ENCODE measurements at regions of chr14 and their contacts with region 1.

Region 1: DNA sequence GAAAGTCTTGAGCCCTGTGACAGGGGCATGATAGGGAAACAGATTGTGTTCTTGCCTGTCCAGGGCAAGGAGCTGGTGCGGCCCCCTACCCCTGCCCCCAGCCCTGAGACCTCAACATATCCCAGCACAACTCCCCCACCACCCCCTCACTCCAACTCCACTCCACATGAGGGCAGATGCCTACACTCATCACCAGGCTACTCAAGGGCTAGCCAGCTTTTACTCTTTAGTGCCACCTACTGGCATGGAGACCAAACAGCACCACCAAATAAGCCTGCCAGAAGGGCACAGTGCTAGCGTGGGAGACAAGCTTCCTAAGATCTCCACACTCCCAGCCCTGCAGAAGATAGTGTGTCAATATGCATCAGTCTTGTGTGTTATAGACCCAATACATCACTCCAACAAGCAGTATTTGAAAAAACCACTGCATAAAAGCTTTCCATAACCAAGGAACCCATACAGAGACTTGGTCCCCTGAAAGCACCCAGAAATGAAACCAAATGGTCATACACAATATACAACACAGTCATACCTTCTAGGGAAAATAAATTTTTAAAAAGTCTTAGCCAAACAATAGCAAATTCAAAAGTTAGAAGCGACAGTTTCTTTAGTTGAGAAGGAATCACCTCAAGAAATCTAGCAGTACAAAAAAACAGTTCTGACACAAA is 154.4 kb downstream of the KCNK10 start:
- DNase-seq: peak; percentile 18 to 69 (median 47)
- ATAC-seq: peak; percentile 94
- H3K4me3 ChIP-seq: no peak overlapping the region
- H3K4me3 Mint-ChIP-seq: peak overlapping the region in 1 of 10 donors; percentile 5
- H3K27ac ChIP-seq: no peak overlapping the region
- H3K27ac Mint-ChIP-seq: peak overlapping the region in 1 of 9 donors; percentile 21
- H3K4me1 ChIP-seq: no peaks in the 10 kb centered on the region
- H3K4me1 Mint-ChIP-seq: peaks cover 0 to 14% (median 0%) of the 10 kb centered on the region in 7 donors
- H3K27me3 ChIP-seq: no peaks in the 10 kb centered on the region
- H3K27me3 Mint-ChIP-seq: peaks cover 9 to 41% (median 19%) of the 10 kb centered on the region in 5 donors

Region 2: GRCh38 chr14:87805315-87805723 is 363.3 kb before region 1 on chr14:
- CTCF ChIA-PET with region 1: interaction called, 3 read pairs
- POLR2A ChIA-PET with region 1: no interaction called
- intact Hi-C with region 1: loop called in 1 of 2 experiments (anchors 1 kb)
- DNase-seq: peak in 5 of 9 donors; percentile 1 to 56 (median 8)
- ATAC-seq: no peak
- H3K4me3 ChIP-seq: no peak overlapping the region
- H3K4me3 Mint-ChIP-seq: no peak overlapping the region
- H3K27ac ChIP-seq: no peak overlapping the region
- H3K27ac Mint-ChIP-seq: no peak overlapping the region
- H3K4me1 ChIP-seq: no peaks in the 10 kb centered on the region
- H3K4me1 Mint-ChIP-seq: no peaks in the 10 kb centered on the region
- H3K27me3 ChIP-seq: no peaks in the 10 kb centered on the region
- H3K27me3 Mint-ChIP-seq: peaks cover 2 to 22% (median 17%) of the 10 kb centered on the region in 5 donors

Region 3: GRCh38 chr14:88013750-88014349 is 154.8 kb before region 1 on chr14:
- CTCF ChIA-PET with region 1: interaction called, 15 read pairs
- POLR2A ChIA-PET with region 1: no interaction called
- intact Hi-C with region 1: loop called (anchors 1 kb)
- DNase-seq: no peak
- ATAC-seq: peak; percentile 88
- H3K4me3 ChIP-seq: no peak overlapping the region
- H3K4me3 Mint-ChIP-seq: peak overlapping the region in 5 of 10 donors; percentile 19 to 52 (median 24)
- H3K27ac ChIP-seq: no peak overlapping the region
- H3K27ac Mint-ChIP-seq: peak overlapping the region in 8 of 9 donors; percentile 31 to 91 (median 64)
- H3K4me1 ChIP-seq: peaks cover 14 to 27% of the 10 kb centered on the region in 2 donors
- H3K4me1 Mint-ChIP-seq: peaks cover 56 to 73% (median 69%) of the 10 kb centered on the region in 7 donors
- H3K27me3 ChIP-seq: no peaks in the 10 kb centered on the region
- H3K27me3 Mint-ChIP-seq: no peaks in the 10 kb centered on the region

Region 4: DNA sequence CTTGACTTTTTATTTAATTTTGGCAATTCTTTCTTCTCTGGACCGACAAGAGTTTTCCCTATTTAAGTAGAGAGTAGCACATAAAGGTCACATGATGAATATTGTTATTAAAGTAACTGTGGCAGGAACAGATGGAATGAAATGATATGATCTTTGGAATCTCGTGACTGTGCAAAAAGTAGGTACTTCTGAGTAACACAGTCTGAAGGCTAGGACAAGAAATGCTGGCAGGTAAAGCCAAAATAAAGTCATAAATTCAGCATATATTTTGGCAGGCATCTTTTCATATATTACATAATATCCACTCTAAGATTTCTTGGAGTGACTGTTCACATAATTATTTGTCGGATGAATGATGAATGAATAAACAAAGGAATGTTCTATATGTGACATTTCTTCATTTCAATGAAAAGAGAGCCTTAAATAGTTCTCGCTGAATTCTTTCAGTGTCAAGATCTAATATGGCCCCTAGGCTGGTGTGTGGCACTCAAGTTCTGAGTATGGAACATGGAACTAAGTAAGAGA is 1664.5 kb after region 1 on chr14:
- CTCF ChIA-PET with region 1: no interaction called
- POLR2A ChIA-PET with region 1: no interaction called
- intact Hi-C with region 1: no loop called
- DNase-seq: no peak
- ATAC-seq: no peak
- H3K4me3 ChIP-seq: no peak overlapping the region
- H3K4me3 Mint-ChIP-seq: no peak overlapping the region
- H3K27ac ChIP-seq: no peak overlapping the region
- H3K27ac Mint-ChIP-seq: no peak overlapping the region
- H3K4me1 ChIP-seq: no peaks in the 10 kb centered on the region
- H3K4me1 Mint-ChIP-seq: no peaks in the 10 kb centered on the region
- H3K27me3 ChIP-seq: no peaks in the 10 kb centered on the region
- H3K27me3 Mint-ChIP-seq: peaks cover 0 to 25% (median 0%) of the 10 kb centered on the region in 5 donors

Measured in naive thymus-derived CD4-positive, alpha-beta T cell (primary cell).